Activated naive CD4-positive, alpha-beta T cell treated with anti-CD3 and anti-CD28 coated beads, Interleukin-2, amount 10 ng/mL, durations not matched to agents 7 days and 5 days (primary cell): ENCODE measurements at regions of chr10 and their contacts with region 1.

Region 1: GRCh38 chr10:96017191-96017687 is 26.1 kb upstream of the CCNJ start:
- DNase-seq: peak; percentile 42
- H3K4me3 Mint-ChIP-seq: no peak overlapping the region
- H3K27ac Mint-ChIP-seq: no peak overlapping the region
- H3K4me1 Mint-ChIP-seq: no peaks in the 10 kb centered on the region
- H3K27me3 Mint-ChIP-seq: no peaks in the 10 kb centered on the region

Region 2: GRCh38 chr10:95880704-95881103 is 136.5 kb before region 1 on chr10:
- CTCF ChIA-PET with region 1: no interaction called
- DNase-seq: no peak
- H3K4me3 Mint-ChIP-seq: no peak overlapping the region
- H3K27ac Mint-ChIP-seq: no peak overlapping the region
- H3K4me1 Mint-ChIP-seq: no peaks in the 10 kb centered on the region
- H3K27me3 Mint-ChIP-seq: no peaks in the 10 kb centered on the region

Region 3: GRCh38 chr10:95998255-95998784 is 18.9 kb before region 1 on chr10:
- CTCF ChIA-PET with region 1: interaction called, 11 read pairs
- DNase-seq: no peak
- H3K4me3 Mint-ChIP-seq: no peak overlapping the region
- H3K27ac Mint-ChIP-seq: no peak overlapping the region
- H3K4me1 Mint-ChIP-seq: no peaks in the 10 kb centered on the region
- H3K27me3 Mint-ChIP-seq: no peaks in the 10 kb centered on the region

Region 4: GRCh38 chr10:96292971-96293920 is 276.0 kb after region 1 on chr10:
- CTCF ChIA-PET with region 1: interaction called, 28 read pairs
- DNase-seq: no peak
- H3K4me3 Mint-ChIP-seq: no peak overlapping the region
- H3K27ac Mint-ChIP-seq: no peak overlapping the region
- H3K4me1 Mint-ChIP-seq: peaks cover 9% of the 10 kb centered on the region
- H3K27me3 Mint-ChIP-seq: peaks cover 3% of the 10 kb centered on the region

Region 5: GRCh38 chr10:96339957-96340904 is 323.0 kb after region 1 on chr10:
- CTCF ChIA-PET with region 1: interaction called, 16 read pairs
- DNase-seq: peak; percentile 73
- H3K4me3 Mint-ChIP-seq: no peak overlapping the region
- H3K27ac Mint-ChIP-seq: no peak overlapping the region
- H3K4me1 Mint-ChIP-seq: no peaks in the 10 kb centered on the region
- H3K27me3 Mint-ChIP-seq: peaks cover 18% of the 10 kb centered on the region